ENCODE measurements at regions of chr2 and their contacts with region 1.

Region 1: DNA sequence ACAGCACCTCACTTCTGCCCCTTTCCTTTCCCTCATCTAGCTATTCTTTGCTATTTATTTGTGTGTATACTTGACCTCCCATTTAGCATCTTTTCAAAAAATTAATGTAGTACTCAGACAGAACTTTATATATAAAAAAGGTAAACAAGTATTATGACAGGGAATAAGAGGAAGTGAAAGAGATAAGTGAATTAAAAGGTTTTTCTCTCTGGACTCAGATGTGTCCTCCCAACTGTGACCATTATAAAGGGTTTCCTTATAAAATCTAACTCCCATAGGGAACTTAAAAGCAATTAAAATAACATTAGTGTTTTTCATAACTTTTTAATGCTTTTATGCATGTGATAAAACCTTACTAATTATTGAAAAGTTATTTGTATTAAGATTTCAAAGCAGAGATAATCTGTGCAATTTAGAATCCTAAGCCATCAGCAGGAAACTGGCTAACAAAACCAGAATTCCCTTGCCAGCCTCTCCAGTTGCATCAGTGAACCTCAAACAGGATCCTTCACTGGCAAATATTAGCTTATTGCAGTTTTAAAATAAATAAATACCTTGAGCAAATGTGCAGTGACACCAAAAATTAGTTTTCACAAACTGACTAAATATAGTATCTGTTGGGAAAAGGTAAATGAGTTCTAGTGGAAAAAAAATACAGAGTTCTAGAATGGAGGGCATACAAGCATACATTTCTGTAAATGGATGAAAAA is 930.7 kb downstream of the BCL11A start:
- DNase-seq: no peak
- H3K4me3 Mint-ChIP-seq: no peak overlapping the region
- H3K27ac Mint-ChIP-seq: no peak overlapping the region
- H3K4me1 Mint-ChIP-seq: no peaks in the 10 kb centered on the region
- H3K27me3 Mint-ChIP-seq: no peaks in the 10 kb centered on the region
- CTCF ChIP-seq: no peak

Region 2: GRCh38 chr2:57701391-57701815 is 1921.4 kb before region 1 on chr2:
- CTCF ChIA-PET with region 1: no interaction called
- POLR2A ChIA-PET with region 1: no interaction called
- intact Hi-C with region 1: loop called (anchors 10 kb)
- DNase-seq: no peak
- H3K4me3 Mint-ChIP-seq: no peak overlapping the region
- H3K27ac Mint-ChIP-seq: peak overlapping the region; percentile 37
- H3K4me1 Mint-ChIP-seq: no peaks in the 10 kb centered on the region
- H3K27me3 Mint-ChIP-seq: no peaks in the 10 kb centered on the region
- CTCF ChIP-seq: no peak